Activated T-helper 2 cell treated with anti-CD3 and anti-CD28 coated beads, Interferon-gamma antibody, Interleukin-2, Interleukin-4, amounts not matched to agents 10 μg/mL and 5 μg/mL and 100 μg/mL, durations not matched to agents 14 hours and 24 hours and 36 hours (primary cell): ENCODE measurements at regions of chr11 and their contacts with region 1.

Region 1: DNA sequence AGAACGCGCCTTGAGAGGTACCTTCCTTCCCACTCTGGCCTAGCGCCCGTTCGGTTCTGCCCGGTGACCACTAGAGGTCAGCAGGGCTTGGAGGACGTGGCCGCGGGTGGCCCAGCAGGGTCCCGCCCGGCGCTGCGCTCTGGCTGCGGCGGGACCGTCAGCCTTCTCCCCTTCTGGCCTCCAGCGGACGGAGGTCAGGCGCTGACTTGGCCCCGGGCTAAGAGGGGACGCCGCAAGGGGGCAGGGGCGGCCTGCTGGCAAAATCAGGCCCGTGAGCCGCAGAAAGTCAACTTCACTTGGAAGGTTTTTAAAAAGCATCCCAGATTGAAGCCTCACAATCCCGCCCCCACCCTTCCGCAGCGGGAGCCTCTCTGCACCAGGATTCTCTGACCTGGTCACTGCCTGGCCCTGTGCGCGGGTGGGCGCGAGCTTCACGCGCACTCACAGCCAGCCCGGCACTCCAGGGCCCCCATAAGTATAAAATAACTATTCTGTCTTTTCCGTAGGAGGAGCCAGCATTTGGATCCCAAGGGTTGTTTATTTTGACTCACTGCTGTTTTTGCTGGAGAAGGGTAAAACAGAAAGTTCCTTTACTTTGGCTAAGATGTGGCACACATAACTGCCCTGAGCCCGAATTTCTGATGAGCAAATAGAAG is 23.2 kb upstream of the ZBTB16 start:
- DNase-seq: peak; percentile 38
- H3K4me3 Mint-ChIP-seq: no peak overlapping the region
- H3K27ac Mint-ChIP-seq: no peak overlapping the region
- H3K4me1 Mint-ChIP-seq: peaks cover 1% of the 10 kb centered on the region
- H3K27me3 Mint-ChIP-seq: peaks cover 32% of the 10 kb centered on the region

Region 2: GRCh38 chr11:113994077-113994954 is 42.0 kb before region 1 on chr11:
- intact Hi-C with region 1: loop called (anchors 1 kb)
- DNase-seq: no peak
- H3K4me3 Mint-ChIP-seq: no peak overlapping the region
- H3K27ac Mint-ChIP-seq: no peak overlapping the region
- H3K4me1 Mint-ChIP-seq: no peaks in the 10 kb centered on the region
- H3K27me3 Mint-ChIP-seq: peaks cover 10% of the 10 kb centered on the region

Region 3: GRCh38 chr11:115437902-115438575 is 1401.8 kb after region 1 on chr11:
- intact Hi-C with region 1: no loop called
- DNase-seq: no peak
- H3K4me3 Mint-ChIP-seq: no peak overlapping the region
- H3K27ac Mint-ChIP-seq: no peak overlapping the region
- H3K4me1 Mint-ChIP-seq: no peaks in the 10 kb centered on the region
- H3K27me3 Mint-ChIP-seq: no peaks in the 10 kb centered on the region